Posterior cingulate gyrus (tissue), 11 donors: ENCODE measurements at regions of chr1 and their contacts with region 1.

Region 1: GRCh38 chr1:186680245-186681061 is at the start of gene PTGS2:
- DNase-seq: peak; percentile 16 to 95 (median 50)

Region 2: DNA sequence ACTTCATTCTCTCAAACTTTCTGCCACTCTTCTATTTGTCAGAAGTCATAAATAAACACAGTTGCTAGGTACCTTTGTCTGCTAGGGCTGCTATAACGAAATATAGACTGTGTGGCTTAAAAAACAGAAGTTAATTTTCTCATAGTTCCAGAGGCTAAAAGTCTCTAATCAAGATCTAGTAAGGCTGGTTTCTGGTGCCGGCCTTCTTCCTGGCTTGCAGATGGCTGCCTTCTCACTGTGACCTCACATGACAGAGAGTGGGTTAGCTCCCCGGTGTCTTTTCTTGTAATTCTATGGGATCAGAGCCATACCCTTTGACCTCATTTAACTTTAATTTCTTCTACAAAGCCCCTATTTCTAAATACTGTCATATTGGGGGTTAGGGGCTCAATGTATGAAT is 225.5 kb before region 1 on chr1:
- intact Hi-C with region 1: no loop called
- DNase-seq: no peak

Region 3: GRCh38 chr1:186482661-186483255 is 197.7 kb before region 1 on chr1:
- intact Hi-C with region 1: loop called (anchors 10 kb)
- DNase-seq: peak in 7 of 10 donors; percentile 29 to 86 (median 47)

Region 4: DNA sequence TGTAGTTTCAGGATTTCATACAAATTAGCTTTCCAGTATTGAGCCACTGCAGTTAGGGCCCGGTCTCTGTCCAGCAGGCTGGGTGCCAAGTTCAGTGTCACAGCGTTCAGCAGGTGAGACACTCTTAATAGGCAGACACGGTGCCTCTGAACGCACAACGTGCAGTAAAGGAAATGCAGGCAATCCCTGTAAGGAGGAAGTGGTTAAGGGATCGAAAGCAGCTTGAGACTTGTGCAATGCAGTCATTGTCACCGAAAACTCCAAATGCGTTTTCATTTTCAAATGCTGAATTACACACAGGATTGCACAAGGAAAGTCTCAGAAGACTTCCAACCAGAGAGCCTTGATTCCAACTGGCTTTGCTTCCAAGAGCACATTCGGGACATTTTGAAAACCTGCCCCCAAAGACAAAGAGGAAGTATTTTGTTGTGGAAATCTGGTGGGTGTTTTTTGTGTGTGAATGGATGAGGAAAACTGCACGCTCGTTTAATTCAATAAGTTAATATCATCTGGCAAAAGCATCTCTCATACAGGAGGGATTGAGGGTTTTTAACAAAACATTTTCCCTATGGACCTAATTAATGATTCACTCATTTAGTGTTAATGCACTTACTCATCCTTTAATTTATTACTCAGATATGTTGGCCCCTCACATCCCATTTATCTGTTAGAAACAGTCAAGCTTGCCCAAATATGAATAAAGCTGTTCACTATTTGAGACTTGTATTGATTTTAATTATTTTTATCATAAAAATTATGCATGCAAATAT is 61.9 kb before region 1 on chr1:
- intact Hi-C with region 1: loop called (anchors 5 kb)
- DNase-seq: peak in 3 of 10 donors; percentile 12 to 66 (median 54)